SK-N-SH (cell line): ENCODE measurements at regions of chr7 and their contacts with region 1.

Region 1: GRCh38 chr7:140653319-140654108 is 12.9 kb upstream of the DENND2A start:
- DNase-seq: peak; percentile 87
- H3K4me3 ChIP-seq: no peak overlapping the region
- H3K27ac ChIP-seq: no peak overlapping the region
- H3K4me1 ChIP-seq: peaks cover 0 to 3% of the 10 kb centered on the region in 2 experiments; a peak in 1 of 4 replicates
- H3K27me3 ChIP-seq: 0 out of 2 replicates have a peak, but pooled peaks cover 7% of the 10 kb centered on the region
- CTCF ChIP-seq: peak; percentile 98
- EP300 ChIP-seq: peak in 1 of 2 experiments; percentile 18; a peak in 1 of 4 replicates
- RAD21 ChIP-seq: peak; percentile 100

Region 2: DNA sequence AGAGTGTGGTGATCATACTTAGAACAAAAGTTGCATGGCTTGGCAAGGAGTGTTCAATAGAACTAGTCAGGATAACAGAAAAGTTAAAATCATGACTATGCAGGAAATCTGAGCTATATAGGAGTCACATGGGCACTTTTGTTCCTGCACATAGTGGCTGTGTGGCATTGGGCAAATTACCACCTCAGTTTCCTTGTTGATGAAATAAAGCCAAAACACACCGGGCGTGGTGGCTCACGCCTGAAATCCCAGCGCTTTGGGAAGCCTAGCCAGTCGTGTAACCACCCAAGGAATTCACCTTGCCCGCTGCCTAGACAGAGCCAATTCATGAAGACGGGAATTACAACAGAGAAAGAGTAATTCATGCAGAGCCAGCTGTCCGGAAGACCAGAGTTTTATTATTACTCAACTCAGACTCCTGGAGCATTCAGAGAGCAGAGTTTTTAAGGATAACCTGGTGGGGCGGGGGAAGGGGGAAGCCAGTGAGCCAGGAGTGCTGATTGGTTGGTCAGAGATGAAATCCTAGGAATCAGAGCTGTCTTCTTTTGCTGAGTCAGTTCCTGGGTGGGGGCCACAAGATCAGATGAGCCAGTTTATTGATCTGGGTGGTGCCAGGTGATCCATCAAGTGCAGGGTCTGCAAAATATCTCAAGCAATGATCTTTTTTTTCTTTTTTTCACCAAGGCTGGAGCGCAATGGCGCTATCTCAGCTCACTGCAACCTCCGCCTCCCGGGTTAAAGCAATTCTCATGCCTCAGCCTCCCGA is 167.8 kb before region 1 on chr7:
- CTCF ChIA-PET with region 1: interaction called, 23 read pairs
- POLR2A ChIA-PET with region 1: no interaction called
- DNase-seq: no peak
- H3K4me3 ChIP-seq: no peak overlapping the region
- H3K27ac ChIP-seq: no peak overlapping the region
- H3K4me1 ChIP-seq: no peaks in the 10 kb centered on the region
- H3K27me3 ChIP-seq: peaks cover 8% of the 10 kb centered on the region; the same call in 1 of the 2 replicates
- CTCF ChIP-seq: no peak
- EP300 ChIP-seq: no peak
- RAD21 ChIP-seq: no peak

Region 3: DNA sequence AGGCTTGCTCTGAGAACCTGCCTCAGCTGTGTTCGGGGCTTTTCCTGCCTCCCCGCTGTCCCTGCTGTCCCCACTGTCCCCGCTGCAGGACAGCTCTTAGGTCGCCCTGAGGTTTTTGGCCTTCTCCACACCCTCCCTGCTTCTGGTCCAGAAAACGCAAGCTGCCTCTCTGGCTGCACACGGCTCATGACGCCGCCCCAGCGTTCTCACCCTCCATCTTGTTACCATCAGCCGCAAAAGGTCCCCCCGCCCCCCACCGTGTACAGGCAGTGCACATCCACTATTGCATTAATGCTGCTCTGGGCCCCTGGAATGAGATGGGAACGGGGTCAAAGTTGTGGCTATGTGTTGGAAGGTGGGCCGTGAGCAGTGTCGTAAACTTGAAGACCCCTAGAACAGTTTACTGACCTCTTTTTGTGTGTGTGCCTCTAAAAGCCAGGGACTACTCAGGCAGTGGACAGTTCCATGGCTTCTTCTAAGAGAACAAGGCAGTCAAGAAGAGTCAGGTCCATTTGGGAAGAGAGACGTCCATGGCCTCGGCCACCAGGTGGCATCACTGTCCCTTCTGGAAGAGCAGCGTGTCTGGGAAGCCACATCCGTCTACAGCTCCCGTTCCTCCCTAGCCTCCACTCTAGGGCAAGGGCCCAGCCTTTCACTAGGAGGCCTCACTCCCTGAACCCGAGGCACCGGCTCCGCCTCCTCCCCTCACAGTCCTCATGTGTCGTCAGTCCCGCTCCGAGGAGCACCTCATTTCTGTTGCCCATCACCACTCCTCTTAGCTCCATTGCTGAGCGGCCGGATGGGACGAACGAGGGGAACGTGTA is 135.8 kb before region 1 on chr7:
- CTCF ChIA-PET with region 1: interaction called, 433 read pairs
- POLR2A ChIA-PET with region 1: interaction called, 3 read pairs
- DNase-seq: peak; percentile 94
- H3K4me3 ChIP-seq: no peak overlapping the region; a peak in 1 of 4 replicates
- H3K27ac ChIP-seq: no peak overlapping the region
- H3K4me1 ChIP-seq: peaks cover 0 to 3% of the 10 kb centered on the region in 2 experiments; a peak in 1 of 4 replicates
- H3K27me3 ChIP-seq: no peaks in the 10 kb centered on the region
- CTCF ChIP-seq: peak; percentile 95
- EP300 ChIP-seq: no peak
- RAD21 ChIP-seq: peak; percentile 99

Region 4: DNA sequence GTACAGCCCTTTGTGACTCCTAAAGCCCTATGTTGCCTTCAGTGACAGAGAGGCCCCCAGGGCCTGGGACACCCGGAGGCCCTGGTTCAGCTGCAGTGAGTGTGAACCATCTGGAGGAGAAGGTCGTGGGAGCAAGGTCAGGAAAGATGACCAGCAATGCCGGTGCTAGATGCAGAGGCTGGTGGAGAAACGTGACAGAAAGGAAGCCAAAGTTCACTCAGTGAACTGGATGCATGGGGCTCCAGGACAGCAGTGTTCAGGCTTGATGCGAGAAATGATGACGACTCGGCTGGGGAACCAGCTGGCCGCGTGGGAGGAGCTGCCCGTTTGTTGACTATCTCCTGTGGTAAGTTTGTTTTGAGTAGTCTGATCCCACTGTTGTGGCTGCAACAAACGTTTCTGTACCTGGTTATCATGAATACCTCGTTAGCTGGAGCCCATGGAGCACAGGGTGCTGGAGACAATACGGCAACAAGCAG is 120.1 kb before region 1 on chr7:
- CTCF ChIA-PET with region 1: interaction called, 31 read pairs
- POLR2A ChIA-PET with region 1: no interaction called
- DNase-seq: no peak
- H3K4me3 ChIP-seq: no peak overlapping the region
- H3K27ac ChIP-seq: no peak overlapping the region
- H3K4me1 ChIP-seq: no peaks in the 10 kb centered on the region
- H3K27me3 ChIP-seq: no peaks in the 10 kb centered on the region
- CTCF ChIP-seq: no peak
- EP300 ChIP-seq: no peak
- RAD21 ChIP-seq: no peak

Region 5: DNA sequence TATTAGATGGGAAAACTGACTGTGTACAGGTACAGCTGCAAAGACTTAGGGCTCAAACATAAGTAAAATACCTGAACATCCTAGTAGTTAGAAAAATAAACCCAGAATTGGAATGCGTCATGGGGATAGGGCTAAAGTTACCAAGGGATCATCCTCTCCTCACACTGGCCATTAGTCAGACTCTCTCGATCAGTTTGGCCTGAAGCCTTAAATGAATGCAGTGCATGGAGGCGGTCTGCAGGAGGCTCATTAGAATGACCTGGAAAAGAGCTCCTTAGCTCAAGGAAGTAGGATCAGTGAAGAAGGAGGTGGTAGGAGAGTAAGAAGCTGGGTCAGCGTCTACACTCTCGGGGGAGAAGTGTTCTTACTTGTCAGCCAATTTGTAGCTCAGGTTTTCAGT is 48.2 kb before region 1 on chr7:
- CTCF ChIA-PET with region 1: interaction called, 12 read pairs
- POLR2A ChIA-PET with region 1: no interaction called
- DNase-seq: no peak
- H3K4me3 ChIP-seq: no peak overlapping the region
- H3K27ac ChIP-seq: no peak overlapping the region
- H3K4me1 ChIP-seq: peaks cover 0 to 11% of the 10 kb centered on the region in 2 experiments; a peak in 1 of 4 replicates
- H3K27me3 ChIP-seq: no peaks in the 10 kb centered on the region
- CTCF ChIP-seq: no peak
- EP300 ChIP-seq: no peak
- RAD21 ChIP-seq: no peak

Region 6: DNA sequence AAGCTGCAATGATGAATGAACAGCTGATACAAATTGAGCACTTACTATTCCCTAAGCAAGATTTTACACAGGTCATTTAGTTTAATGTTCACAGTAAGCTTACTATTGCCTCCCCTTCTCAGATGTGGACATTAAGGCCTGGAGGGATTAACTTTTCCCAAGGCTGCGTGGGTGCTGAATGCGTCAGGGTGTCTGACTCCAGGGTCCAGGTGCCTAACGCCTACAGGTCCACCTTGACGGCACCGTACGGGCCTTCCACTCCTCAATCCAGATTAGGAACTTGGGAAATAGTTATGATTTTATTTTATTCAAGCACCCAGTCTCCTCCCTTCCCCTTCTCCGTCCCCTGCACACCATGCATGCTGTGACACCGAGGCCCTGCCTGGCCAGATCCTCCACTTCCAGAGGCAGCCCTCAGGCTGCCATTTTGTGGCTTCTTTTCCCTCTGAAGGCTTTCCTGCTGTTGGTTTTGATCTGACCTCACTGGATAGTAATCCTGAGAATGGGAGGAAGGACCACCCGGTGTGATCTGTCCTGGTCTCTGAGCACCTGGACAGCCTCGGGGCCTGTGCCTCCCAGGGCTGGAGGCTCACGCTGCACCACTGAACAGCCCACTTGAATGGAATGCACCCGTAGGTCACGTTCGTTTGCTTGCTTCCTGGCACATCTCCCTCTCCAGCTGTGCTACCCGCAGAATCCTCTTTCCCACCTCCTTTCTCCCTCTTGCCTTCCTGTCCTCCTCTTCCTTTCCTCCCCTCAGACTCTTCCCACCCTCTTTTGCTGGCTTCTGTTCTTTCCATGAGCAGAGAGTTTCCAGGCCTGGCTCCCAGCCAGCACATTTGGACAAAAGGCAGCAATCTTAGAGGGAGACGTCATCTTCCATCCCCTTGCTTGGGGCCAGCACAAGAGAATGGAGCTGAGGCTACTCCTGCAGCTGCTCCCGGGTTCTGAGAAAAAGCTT is 27.3 kb before region 1 on chr7:
- CTCF ChIA-PET with region 1: interaction called, 11 read pairs
- POLR2A ChIA-PET with region 1: no interaction called
- DNase-seq: peak; percentile 69
- H3K4me3 ChIP-seq: no peak overlapping the region
- H3K27ac ChIP-seq: peak overlapping the region; percentile 30 to 66; a peak in 3 of 4 replicates
- H3K4me1 ChIP-seq: peaks cover 4 to 15% of the 10 kb centered on the region in 2 experiments; a peak in 2 of 4 replicates
- H3K27me3 ChIP-seq: no peaks in the 10 kb centered on the region
- CTCF ChIP-seq: no peak
- EP300 ChIP-seq: peak in 1 of 2 experiments; percentile 37; a peak in 1 of 4 replicates
- RAD21 ChIP-seq: no peak

Region 7: DNA sequence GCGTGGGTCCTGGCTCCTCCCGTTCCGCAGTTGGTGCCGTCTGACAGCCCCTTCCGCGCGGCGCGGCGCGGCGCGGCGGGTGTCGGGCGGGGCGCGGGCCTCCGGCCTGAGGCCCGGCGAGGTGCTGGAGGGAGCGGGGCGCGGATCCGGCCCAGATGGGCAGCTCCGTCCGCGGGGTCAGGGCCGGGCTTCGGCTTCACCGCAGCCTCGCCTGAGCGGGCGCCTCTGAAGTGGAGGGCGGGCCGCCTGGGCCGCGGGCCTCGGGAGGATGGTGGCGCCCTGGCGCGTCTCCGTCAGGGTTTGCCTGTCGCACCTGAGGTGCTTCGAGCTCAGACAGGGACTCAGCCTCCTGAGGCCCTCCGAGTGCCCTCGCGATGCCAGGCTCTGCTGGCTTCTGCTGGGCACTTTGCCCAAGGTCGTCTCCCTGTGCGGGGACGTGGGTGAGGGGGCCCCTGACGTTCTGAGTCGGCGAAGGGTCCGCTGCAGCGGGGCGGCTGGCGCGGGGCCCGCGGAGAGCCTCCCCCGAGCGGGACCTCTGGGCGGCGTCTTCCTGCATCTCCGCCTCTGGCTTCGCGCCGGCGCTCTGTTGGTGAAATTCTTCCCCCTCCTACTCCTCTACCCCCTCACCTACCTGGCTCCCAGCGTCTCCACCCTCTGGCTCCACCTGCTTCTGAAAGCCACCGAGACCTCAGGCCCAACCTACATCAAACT is 19.7 kb after region 1 on chr7:
- CTCF ChIA-PET with region 1: interaction called, 28 read pairs
- POLR2A ChIA-PET with region 1: no interaction called
- DNase-seq: peak; percentile 89
- H3K4me3 ChIP-seq: peak overlapping the region; percentile 64 to 74
- H3K27ac ChIP-seq: 0 out of 4 replicates have a peak overlapping the region, but pooled peaks of 1 of the 2 experiments have one; percentile 18
- H3K4me1 ChIP-seq: peaks cover 7 to 20% of the 10 kb centered on the region in 2 experiments; a peak in 2 of 4 replicates
- H3K27me3 ChIP-seq: no peaks in the 10 kb centered on the region
- CTCF ChIP-seq: no peak
- EP300 ChIP-seq: no peak
- RAD21 ChIP-seq: no peak